ENCODE measurements at regions of chr14 and their contacts with region 1.

Region 1: DNA sequence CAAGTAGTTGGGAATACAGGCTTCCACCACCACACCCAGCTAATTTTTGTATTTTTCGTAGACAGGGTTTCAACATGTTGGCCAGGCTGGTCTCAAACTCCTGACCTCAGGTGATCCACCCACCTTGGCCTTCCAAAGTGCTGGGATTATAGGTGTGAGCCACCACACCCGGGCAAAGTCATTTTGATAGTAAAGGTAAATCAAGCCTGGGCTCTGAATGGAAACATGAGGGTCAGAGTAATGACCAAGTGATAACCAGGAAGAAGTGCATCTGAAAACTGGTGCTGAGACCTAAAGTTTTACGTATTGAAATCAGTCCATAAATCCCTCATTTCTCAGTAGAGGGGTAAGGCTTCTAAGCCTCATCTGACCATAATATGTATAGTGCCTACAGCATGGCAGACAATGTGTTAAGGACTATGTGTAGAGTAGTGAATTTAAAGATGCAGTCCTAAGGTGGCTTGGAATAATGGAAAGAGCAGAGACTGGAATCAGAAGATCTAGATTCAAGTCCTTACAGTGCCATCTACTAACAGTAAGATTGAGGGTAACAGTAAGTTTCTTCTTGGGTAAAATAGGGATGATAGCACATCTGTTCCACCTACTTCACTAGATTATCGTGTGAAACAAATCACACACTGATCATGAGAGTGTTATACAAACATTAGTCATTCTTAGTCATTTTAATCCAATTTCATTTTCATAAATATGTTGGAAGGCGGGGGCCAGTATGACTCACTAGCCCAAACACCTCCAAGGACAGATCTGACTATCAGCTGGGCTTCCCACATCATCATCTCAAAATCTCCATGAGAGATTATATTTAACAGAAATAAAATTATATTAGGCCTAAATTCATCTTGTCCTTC is 11.2 kb downstream of the MAP4K5 start:
- DNase-seq: peak; percentile 84
- ATAC-seq: peak; percentile 81
- H3K4me3 Mint-ChIP-seq: peak overlapping the region; percentile 55
- H3K27ac Mint-ChIP-seq: peak overlapping the region; percentile 94
- H3K4me1 Mint-ChIP-seq: peaks cover 56% of the 10 kb centered on the region
- H3K27me3 Mint-ChIP-seq: no peaks in the 10 kb centered on the region

Region 2: GRCh38 chr14:49862089-49862673 is 659.0 kb before region 1 on chr14:
- CTCF ChIA-PET with region 1: no interaction called
- POLR2A ChIA-PET with region 1: no interaction called
- intact Hi-C with region 1: loop called in 1 of 2 experiments (anchors 5 kb)
- DNase-seq: peak; percentile 92
- ATAC-seq: peak; percentile 13
- H3K4me3 Mint-ChIP-seq: no peak overlapping the region
- H3K27ac Mint-ChIP-seq: no peak overlapping the region
- H3K4me1 Mint-ChIP-seq: peaks cover 20% of the 10 kb centered on the region
- H3K27me3 Mint-ChIP-seq: no peaks in the 10 kb centered on the region

Region 3: DNA sequence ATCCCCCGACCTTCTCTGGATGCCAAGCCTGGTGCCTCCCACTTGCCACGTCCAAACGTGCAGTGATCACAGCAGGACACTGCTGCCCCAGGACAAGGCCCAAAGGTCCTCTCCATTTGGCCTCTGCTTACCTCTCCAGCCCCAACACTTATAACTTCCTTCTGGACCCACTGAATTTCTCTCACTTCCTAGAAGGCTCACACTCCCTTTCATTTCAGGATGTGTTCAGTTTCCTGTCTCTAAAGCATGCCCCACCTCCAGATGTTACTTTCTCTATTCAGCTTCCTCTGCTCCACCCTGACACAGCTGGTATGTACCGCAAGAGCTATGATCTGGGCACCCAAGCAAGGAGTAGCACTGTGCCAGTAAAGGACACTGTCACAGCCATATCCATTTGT is 157.5 kb before region 1 on chr14:
- CTCF ChIA-PET with region 1: no interaction called
- POLR2A ChIA-PET with region 1: no interaction called
- intact Hi-C with region 1: loop called (anchors 1 to 5 kb)
- DNase-seq: peak; percentile 66
- ATAC-seq: peak; percentile 96
- H3K4me3 Mint-ChIP-seq: peak overlapping the region; percentile 82
- H3K27ac Mint-ChIP-seq: peak overlapping the region; percentile 94
- H3K4me1 Mint-ChIP-seq: peaks cover 20% of the 10 kb centered on the region
- H3K27me3 Mint-ChIP-seq: no peaks in the 10 kb centered on the region

Region 4: DNA sequence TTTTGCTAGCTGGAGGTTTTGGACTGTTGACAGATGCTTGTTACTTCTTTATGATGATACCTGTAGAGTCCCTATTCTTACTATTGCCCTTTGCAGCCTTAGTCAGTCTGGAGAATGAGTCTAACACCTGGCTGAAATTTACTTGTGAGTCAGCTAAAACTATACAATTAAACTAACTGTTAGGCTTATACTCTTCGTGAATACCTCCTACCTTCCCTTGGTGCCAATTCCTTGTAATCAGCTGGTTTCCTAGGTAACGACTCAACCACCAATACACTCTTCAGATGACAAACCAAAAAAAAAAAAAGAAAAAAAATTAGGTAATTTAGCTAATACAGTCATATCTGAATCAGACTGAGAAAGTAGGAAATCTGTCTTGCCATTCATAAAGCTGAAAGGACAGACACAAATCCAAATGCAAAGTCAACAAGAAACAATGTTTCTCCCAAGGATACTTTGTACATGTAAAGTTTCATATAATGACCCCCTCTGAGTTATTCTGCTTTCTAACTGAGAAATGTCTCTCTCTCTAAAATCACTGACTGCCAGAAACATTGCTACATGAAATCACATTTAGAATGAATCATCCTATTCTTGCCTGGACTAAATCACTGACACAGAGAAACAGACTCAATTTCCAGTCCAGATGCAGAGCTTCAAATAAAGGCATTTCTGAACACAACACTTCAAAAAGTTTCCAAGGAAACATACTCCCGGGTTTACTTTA is 68.0 kb before region 1 on chr14:
- CTCF ChIA-PET with region 1: no interaction called
- POLR2A ChIA-PET with region 1: interaction called, 3 read pairs
- intact Hi-C with region 1: loop called (anchors 1 kb)
- DNase-seq: no peak
- ATAC-seq: peak; percentile 92
- H3K4me3 Mint-ChIP-seq: no peak overlapping the region
- H3K27ac Mint-ChIP-seq: peak overlapping the region; percentile 22
- H3K4me1 Mint-ChIP-seq: peaks cover 16% of the 10 kb centered on the region
- H3K27me3 Mint-ChIP-seq: no peaks in the 10 kb centered on the region

Region 5: DNA sequence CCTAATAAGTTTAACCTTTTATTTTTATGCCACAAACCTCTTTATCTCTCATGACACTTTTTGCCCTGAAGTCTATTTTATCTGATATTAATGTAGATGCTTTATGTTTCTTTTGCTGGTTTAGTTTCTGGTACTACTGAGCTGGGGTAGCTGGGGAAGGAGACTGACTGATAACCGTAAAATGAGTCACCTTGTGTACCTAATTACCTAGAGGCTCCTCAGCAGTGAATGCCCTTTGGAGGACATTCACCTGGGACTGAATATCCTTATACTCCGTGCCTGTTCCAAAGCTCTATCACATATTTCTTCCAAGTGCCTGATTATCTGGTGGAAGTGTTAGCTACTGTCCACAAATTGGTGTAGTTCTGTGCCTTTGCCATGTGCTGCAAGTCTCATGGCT is 52.7 kb after region 1 on chr14:
- CTCF ChIA-PET with region 1: no interaction called
- POLR2A ChIA-PET with region 1: no interaction called
- intact Hi-C with region 1: no loop called
- DNase-seq: no peak
- ATAC-seq: peak; percentile 36
- H3K4me3 Mint-ChIP-seq: no peak overlapping the region
- H3K27ac Mint-ChIP-seq: no peak overlapping the region
- H3K4me1 Mint-ChIP-seq: no peaks in the 10 kb centered on the region
- H3K27me3 Mint-ChIP-seq: no peaks in the 10 kb centered on the region

Region 6: DNA sequence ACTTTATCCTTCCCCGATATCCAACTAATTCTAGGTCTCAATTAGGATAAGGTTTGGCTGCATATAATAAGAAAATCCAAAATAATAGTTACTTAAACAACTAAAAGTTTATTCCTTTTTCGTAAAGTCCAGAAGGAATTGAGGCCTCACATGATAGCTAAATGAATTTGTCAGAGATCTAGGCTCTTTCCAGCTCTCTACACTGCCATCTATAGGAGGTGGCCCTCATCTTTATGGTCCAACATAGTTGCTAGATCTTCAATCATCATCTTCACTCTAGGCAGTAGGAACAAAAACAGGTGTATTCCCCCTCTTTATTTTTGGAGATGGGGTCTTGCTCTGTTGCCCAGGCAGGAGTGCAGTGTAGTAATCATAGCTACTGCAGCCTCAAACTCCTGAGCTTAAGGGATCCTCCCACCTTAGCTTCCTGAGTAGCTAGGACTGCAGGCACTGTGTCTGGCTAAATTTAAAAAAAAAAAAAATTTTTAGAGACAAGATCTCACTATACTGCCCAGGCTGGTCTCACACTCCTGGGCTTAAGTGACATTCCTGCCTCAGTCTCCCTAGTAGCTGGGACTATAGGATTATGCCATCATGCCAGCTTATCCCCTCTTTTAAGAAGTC is 193.4 kb after region 1 on chr14:
- CTCF ChIA-PET with region 1: no interaction called
- POLR2A ChIA-PET with region 1: no interaction called
- intact Hi-C with region 1: no loop called
- DNase-seq: no peak
- ATAC-seq: peak; percentile 60
- H3K4me3 Mint-ChIP-seq: no peak overlapping the region
- H3K27ac Mint-ChIP-seq: no peak overlapping the region
- H3K4me1 Mint-ChIP-seq: no peaks in the 10 kb centered on the region
- H3K27me3 Mint-ChIP-seq: peaks cover 6% of the 10 kb centered on the region

Region 7: DNA sequence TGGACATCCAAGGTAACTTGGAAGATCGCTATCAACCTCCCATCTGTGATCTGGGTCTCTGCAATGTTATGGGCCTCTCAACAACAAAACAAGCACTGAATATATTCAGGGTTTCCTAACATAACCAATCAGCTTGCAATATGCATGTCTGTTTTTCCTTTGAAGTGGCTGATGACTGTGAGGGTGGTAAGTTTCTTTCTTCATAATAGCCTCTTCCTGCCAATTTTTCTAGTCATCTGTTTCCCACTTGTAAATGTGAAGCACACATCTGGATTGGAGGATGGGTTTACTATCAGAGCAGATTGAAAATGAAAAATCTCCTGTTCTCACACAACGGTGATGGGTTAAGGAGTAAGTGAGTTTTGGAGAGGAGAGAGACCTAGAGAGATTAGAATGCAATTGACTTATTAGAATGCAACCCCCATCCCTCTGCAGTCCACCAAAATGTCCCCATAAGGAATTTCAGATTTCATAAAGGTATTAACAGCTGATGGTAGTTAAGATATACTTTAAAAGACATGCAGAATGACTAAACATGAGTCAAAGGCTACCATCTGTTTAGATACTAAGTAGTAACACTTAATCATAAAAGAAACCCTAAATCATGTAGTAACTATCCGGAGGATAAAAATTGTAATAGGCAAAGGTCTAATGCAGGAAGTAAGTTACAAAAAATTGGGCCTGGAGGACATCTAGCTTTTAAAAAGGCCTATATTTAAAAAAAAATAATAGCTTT is 205.4 kb after region 1 on chr14:
- CTCF ChIA-PET with region 1: no interaction called
- POLR2A ChIA-PET with region 1: interaction called, 3 read pairs
- intact Hi-C with region 1: loop called in 1 of 2 experiments (anchors 1 kb)
- DNase-seq: peak; percentile 31
- ATAC-seq: peak; percentile 93
- H3K4me3 Mint-ChIP-seq: peak overlapping the region; percentile 39
- H3K27ac Mint-ChIP-seq: peak overlapping the region; percentile 95
- H3K4me1 Mint-ChIP-seq: peaks cover 32% of the 10 kb centered on the region
- H3K27me3 Mint-ChIP-seq: no peaks in the 10 kb centered on the region

Measured in activated CD4-positive, alpha-beta T cell treated with anti-CD3 and anti-CD28 coated beads for 36 hours (primary cell).